Heart right ventricle (tissue), 16 donors: ENCODE measurements at regions of chr1 and their contacts with region 1.

Region 1: GRCh38 chr1:153485863-153486262 is 25.4 kb upstream of the S100A7 start:
- DNase-seq: peak in 1 of 2 donors; percentile 39
- ATAC-seq: no peak
- H3K4me3 ChIP-seq: no peak overlapping the region
- H3K27ac ChIP-seq: no peak overlapping the region
- H3K4me1 ChIP-seq: peaks cover 0 to 25% (median 10%) of the 10 kb centered on the region in 9 donors
- H3K27me3 ChIP-seq: peaks cover 0 to 22% (median 0%) of the 10 kb centered on the region in 7 donors
- CTCF ChIP-seq: no peak

Region 2: GRCh38 chr1:153360190-153360927 is 125.5 kb before region 1 on chr1:
- intact Hi-C with region 1: loop called in 1 of 10 experiments (anchors 5 kb)
- DNase-seq: no peak
- ATAC-seq: peak in 5 of 8 donors; percentile 26 to 60 (median 43)
- H3K4me3 ChIP-seq: peak overlapping the region in 1 of 10 donors; percentile 50
- H3K27ac ChIP-seq: peak overlapping the region in 2 of 10 donors; percentile 10 to 86
- H3K4me1 ChIP-seq: peaks cover 0 to 62% (median 6%) of the 10 kb centered on the region in 9 donors
- H3K27me3 ChIP-seq: no peaks in the 10 kb centered on the region
- CTCF ChIP-seq: no peak

Region 3: GRCh38 chr1:153598309-153599172 is 112.7 kb after region 1 on chr1:
- intact Hi-C with region 1: no loop called
- DNase-seq: no peak
- ATAC-seq: peak in 7 of 8 donors; percentile 49 to 88 (median 81)
- H3K4me3 ChIP-seq: no peak overlapping the region
- H3K27ac ChIP-seq: peak overlapping the region in 6 of 10 donors; percentile 8 to 70 (median 54)
- H3K4me1 ChIP-seq: peaks cover 0 to 19% (median 3%) of the 10 kb centered on the region in 9 donors
- H3K27me3 ChIP-seq: no peaks in the 10 kb centered on the region
- CTCF ChIP-seq: no peak